ENCODE measurements at regions of chr1 and their contacts with region 1.

Region 1: DNA sequence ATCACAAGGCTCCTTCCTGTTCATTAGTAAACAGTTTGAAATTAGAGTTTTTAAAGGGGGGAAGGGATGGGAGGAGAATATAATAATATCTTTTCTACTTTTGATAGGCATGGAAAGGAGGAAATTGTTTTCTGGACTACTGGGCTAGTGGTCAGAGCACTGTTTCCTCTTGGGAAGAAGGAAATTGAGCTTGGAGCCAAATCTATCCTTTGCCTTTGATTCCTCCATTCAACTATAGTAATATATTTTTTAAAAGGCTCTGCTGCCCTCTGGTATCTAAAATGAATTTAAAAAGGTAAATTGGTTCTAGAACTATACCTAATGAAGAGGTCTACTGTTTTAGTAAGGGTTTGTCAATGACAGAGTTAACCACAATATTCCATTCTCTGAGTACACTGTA is 5.9 kb downstream of the IARS2 start:
- DNase-seq: no peak
- H3K4me3 ChIP-seq: no peak overlapping the region
- H3K27ac ChIP-seq: no peak overlapping the region
- H3K4me1 ChIP-seq: peaks cover 11% of the 10 kb centered on the region
- CTCF ChIP-seq: no peak

Region 2: DNA sequence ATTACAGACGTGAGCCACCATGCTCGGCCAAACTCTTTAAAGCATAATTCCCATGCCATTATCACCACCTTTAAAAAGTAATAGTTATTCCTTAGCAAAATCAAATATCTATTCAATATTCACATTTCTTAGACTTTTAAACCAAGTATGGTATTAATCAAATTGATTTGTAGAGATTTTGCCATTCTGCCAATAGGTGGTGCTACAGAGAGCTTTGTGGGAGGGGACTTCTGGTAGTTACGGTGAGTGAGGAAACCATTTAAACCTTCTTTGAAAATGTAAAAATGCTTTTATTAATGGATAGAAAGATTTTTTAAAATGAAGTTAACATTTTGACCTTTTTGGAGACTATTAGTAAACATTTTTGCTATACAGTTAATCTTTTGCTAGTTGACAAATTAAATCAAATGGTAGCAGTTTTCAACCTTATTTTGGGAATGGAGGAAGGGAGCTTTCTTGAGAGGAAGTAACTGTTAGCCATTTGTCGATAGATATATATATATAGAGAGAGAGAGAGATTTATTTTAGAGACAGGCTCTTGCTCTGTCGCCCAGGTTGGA is 13.4 kb after region 1 on chr1:
- CTCF ChIA-PET with region 1: no interaction called
- POLR2A ChIA-PET with region 1: interaction called, 15 read pairs
- intact Hi-C with region 1: no loop called
- DNase-seq: peak; percentile 54
- H3K4me3 ChIP-seq: no peak overlapping the region
- H3K27ac ChIP-seq: no peak overlapping the region
- H3K4me1 ChIP-seq: no peaks in the 10 kb centered on the region
- CTCF ChIP-seq: peak; percentile 89

Measured in OCI-LY7 (cell line).